ENCODE measurements at regions of chr5 and their contacts with region 1.

Region 1: GRCh38 chr5:39570403-39571027 is 145.7 kb upstream of the DAB2 start:
- DNase-seq: peak; percentile 28
- H3K4me3 ChIP-seq: no peak overlapping the region
- H3K27ac ChIP-seq: no peak overlapping the region
- H3K4me1 ChIP-seq: no peaks in the 10 kb centered on the region
- H3K27me3 ChIP-seq: no peaks in the 10 kb centered on the region
- CTCF ChIP-seq: peak; percentile 69 to 71

Region 2: DNA sequence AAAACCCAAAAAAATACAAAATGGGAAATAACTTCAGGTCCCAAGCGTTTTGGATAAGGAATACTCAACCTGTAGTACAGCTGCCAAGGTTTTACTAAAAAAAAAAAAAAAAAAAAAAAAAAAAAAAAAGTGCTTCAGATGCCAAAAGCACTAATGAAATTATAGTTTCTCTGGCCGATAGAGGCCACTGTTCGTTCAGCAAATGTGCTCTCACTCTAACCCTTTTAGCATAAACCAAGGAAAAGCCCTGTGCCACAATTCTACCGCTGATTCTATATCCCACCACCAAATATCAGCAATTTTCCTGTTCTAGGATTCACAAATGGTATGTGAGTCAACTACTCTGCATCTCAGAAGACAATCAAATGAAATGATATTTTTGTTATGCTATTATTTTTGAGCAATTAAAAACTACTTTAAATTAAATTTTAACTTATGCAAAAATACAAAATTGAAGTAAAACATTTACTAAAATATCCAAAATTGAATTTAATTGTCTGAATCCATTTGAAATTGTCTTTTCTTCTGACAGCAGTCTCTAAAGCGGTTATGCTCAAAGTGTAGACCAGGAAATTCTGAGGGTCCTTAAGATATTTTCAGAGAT is 576.1 kb before region 1 on chr5:
- CTCF ChIA-PET with region 1: no interaction called
- dilution Hi-C with region 1: no loop called
- in situ Hi-C with region 1: no loop called
- intact Hi-C with region 1: loop called (anchors 10 kb)
- DNase-seq: peak; percentile 61
- H3K4me3 ChIP-seq: no peak overlapping the region
- H3K27ac ChIP-seq: no peak overlapping the region
- H3K4me1 ChIP-seq: no peaks in the 10 kb centered on the region
- H3K27me3 ChIP-seq: no peaks in the 10 kb centered on the region
- CTCF ChIP-seq: peak; percentile 49 to 63

Region 3: DNA sequence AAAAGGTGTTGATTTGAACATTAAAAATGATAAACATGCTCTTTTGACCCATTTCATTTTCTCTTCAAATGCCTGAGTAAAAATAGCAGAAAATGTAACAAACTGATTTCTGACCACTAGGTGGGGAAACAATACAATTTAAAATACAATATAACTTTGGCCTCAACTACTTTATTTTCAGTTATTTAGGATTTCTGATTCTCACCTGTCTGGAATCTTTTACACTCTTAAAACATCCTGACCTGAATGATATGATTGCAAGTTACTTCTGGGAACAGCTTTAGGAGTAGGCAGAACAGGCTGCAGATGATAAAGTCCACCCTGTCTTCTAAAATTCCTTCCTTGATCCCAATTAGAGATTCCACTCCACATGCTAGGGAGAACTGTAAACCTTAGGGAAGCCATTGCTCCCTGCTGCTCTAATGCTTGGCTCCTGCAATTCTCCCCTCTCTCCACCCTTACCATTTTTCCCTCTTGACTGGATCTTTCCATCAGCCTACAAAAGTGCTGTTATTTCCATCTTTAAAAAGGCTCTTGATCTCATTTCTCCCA is 421.5 kb before region 1 on chr5:
- CTCF ChIA-PET with region 1: no interaction called
- dilution Hi-C with region 1: no loop called
- in situ Hi-C with region 1: loop called in 1 of 2 experiments (anchors 25 kb)
- intact Hi-C with region 1: no loop called
- DNase-seq: no peak
- H3K4me3 ChIP-seq: no peak overlapping the region
- H3K27ac ChIP-seq: no peak overlapping the region
- H3K4me1 ChIP-seq: no peaks in the 10 kb centered on the region
- H3K27me3 ChIP-seq: no peaks in the 10 kb centered on the region
- CTCF ChIP-seq: peak; percentile 33 to 41

Region 4: DNA sequence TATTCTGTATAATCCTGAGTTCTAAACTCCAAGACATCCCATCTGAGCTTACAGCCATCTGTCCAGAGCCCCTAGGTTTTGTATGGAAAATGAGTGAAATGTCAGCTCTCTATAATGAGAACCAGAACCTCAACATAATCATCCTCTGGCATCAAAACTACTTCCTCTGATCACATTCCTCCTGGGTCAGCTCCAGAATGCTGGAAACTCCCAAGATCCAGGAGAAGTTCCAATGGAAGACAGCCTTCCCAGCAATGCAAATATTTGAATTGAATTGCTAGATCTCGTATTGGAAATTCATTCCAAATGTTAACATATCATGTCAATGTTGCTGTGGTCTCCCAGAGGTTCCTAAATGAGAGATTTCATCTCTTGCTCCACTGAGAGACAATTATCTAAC is 230.0 kb before region 1 on chr5:
- CTCF ChIA-PET with region 1: interaction called, 12 read pairs
- dilution Hi-C with region 1: no loop called
- in situ Hi-C with region 1: no loop called
- intact Hi-C with region 1: no loop called
- DNase-seq: no peak
- H3K4me3 ChIP-seq: no peak overlapping the region
- H3K27ac ChIP-seq: no peak overlapping the region
- H3K4me1 ChIP-seq: no peaks in the 10 kb centered on the region
- H3K27me3 ChIP-seq: no peaks in the 10 kb centered on the region
- CTCF ChIP-seq: no peak

Region 5: DNA sequence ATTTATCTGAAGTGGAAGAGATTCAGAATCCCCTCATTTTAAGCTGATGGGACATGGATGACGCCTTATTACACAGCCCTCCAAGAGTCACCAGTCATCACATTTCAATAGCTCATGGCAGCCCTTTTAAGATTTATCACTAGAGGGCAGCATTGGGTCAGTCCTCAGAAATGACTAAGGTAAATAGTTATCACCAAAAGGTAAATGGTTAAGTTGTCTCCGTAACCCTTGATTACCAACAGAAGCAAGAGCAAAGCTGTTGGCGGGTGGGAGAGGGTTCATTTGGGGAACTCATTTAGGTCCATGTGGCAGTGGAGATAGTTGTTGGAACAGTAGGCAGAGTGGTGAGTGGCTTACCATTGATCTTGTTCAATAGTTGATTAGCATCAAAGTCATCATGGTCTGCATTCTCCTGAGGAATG is 194.2 kb before region 1 on chr5:
- CTCF ChIA-PET with region 1: interaction called, 7 read pairs
- dilution Hi-C with region 1: no loop called
- in situ Hi-C with region 1: no loop called
- intact Hi-C with region 1: loop called (anchors 1 kb)
- DNase-seq: peak; percentile 52
- H3K4me3 ChIP-seq: no peak overlapping the region
- H3K27ac ChIP-seq: no peak overlapping the region
- H3K4me1 ChIP-seq: no peaks in the 10 kb centered on the region
- H3K27me3 ChIP-seq: no peaks in the 10 kb centered on the region
- CTCF ChIP-seq: peak; percentile 83 to 84

Region 6: DNA sequence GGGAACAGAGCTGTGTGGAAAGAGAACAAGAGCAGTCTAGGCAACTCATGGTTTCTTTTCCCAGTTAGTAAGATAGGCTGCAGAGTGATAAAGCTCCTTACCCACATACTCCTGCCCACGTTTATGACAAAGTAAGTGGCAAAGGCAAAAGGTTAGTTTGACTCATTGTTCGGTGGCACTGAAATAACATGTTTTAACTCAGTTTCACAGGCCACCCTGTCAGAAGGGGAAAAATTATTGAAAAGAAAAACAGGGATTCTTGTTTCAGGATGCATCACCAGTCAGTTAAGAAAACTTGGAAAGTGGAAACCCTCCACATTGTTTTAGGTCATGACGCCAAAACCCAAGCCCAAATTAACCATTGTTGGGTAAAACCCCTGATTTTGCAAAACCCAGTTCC is 123.5 kb before region 1 on chr5:
- CTCF ChIA-PET with region 1: no interaction called
- dilution Hi-C with region 1: no loop called
- in situ Hi-C with region 1: no loop called
- intact Hi-C with region 1: no loop called
- DNase-seq: no peak
- H3K4me3 ChIP-seq: no peak overlapping the region
- H3K27ac ChIP-seq: no peak overlapping the region
- H3K4me1 ChIP-seq: no peaks in the 10 kb centered on the region
- H3K27me3 ChIP-seq: no peaks in the 10 kb centered on the region
- CTCF ChIP-seq: no peak